MCF 10A (cell line): ENCODE measurements at regions of chr9 and their contacts with region 1.

Region 1: DNA sequence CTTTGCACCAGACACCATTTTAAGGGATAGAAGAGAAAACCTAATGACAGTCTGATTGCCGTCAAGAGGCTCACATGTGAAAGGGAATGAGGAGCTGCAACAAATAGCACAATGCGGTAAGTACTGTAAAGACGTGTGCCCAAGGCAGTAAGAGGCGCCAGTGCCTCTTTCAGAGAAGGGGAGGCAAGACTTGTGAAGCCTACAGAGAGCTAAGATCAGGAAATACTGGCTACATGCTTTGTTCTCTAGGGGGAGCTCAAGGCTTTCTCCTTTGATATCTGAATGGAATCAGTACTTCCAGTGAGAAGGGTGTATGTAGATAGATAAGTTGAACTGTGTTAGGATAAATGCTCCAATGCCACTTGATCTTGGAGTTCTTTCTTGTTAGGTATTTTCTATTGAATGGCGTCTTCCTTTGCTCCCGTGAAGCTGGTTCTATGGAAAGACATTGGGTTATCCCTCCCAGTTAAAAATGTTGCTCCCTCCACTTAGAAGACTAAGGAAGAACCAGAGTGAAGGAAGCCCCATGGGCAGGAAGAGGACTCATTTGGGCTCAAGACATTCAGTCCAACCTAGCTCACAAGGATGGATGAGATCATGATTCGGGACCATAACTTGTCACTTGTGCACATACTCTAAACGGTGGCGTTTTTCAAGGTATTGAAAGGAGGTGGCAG is 23.5 kb upstream of the ALDOB start:
- DNase-seq: peak; percentile 84
- H3K4me3 Mint-ChIP-seq: no peak overlapping the region
- H3K27ac Mint-ChIP-seq: no peak overlapping the region
- H3K4me1 Mint-ChIP-seq: peaks cover 6% of the 10 kb centered on the region
- H3K27me3 Mint-ChIP-seq: no peaks in the 10 kb centered on the region
- CTCF ChIP-seq: peak; percentile 71

Region 2: GRCh38 chr9:101443364-101443771 is 15.7 kb before region 1 on chr9:
- CTCF ChIA-PET with region 1: interaction called, 27 read pairs
- POLR2A ChIA-PET with region 1: interaction called, 3 read pairs
- intact Hi-C with region 1: no loop called
- DNase-seq: no peak
- H3K4me3 Mint-ChIP-seq: no peak overlapping the region
- H3K27ac Mint-ChIP-seq: no peak overlapping the region
- H3K4me1 Mint-ChIP-seq: peaks cover 9% of the 10 kb centered on the region
- H3K27me3 Mint-ChIP-seq: peaks cover 31% of the 10 kb centered on the region
- CTCF ChIP-seq: no peak

Region 3: DNA sequence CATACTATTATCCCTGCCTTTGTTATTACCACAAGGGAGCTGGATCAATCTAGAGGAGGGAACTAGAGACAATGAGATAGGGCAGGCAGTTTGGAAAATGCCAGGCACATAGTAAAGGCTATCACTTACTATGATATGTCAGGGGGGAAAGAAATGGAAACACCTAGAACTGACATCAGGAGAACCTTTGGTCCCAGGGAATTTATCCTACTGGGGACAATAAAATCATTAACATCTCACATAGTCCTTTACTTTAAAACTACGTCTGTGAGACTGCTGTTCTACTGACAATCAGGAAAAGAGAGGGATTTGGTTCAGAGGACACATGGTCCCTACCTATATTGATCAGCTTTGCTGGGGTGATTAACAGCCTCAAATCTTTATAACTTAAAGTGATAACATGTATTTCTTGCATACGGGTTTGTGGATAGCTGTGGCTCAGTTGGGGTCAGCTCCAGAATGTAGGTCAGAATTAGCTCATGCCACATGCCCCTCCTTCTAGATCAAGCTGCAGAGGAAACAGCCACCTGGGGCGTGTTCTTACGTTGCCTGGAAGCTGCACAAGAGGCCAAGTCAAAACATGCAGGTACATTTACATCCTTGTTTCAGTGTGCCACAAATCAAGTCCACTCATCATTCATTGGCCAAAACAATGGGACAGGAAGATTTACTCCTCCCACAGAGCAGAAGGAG is 20.4 kb after region 1 on chr9:
- CTCF ChIA-PET with region 1: interaction called, 173 read pairs
- POLR2A ChIA-PET with region 1: interaction called, 9 read pairs
- intact Hi-C with region 1: no loop called
- DNase-seq: peak; percentile 92
- H3K4me3 Mint-ChIP-seq: peak overlapping the region; percentile 44
- H3K27ac Mint-ChIP-seq: peak overlapping the region; percentile 60
- H3K4me1 Mint-ChIP-seq: peaks cover 68% of the 10 kb centered on the region
- H3K27me3 Mint-ChIP-seq: no peaks in the 10 kb centered on the region
- CTCF ChIP-seq: no peak

Region 4: DNA sequence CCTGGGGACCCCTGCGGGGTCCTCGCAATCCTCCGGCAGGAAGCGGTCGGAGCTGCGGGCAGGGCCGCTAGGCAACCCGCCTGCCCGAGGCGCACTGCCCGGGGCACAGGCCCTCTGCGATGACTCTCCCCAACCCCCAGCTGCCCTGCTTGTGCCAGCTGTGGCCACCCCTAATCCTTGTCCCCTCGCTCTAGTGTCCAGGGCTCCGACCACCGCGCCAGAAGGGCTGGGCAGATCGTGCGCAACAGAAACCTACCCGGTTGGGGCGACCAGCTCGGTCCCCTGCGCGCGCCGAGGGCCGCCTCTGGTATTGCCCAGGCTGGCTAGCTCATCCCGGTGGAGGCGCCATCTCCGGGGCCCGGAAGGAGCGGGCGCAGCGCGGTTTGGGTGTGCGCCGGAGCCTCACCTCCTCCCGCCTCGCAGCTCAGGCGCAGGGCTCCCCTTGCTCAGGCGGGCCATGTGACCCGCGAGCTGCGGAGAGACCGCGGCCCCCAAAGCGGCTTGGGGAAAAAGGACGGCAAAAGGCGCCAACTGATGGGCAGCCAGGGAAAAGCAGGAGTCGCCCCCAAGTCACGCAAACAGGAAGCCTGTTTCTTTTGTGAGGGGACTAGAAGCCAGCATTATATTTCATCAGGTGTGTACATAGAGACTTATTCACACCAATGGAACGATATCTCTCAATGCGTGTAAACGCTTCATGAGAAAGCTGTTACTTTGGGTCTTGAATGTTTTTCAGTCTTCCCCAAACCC is 27.8 kb after region 1 on chr9:
- CTCF ChIA-PET with region 1: interaction called, 173 read pairs
- POLR2A ChIA-PET with region 1: interaction called, 7 read pairs
- intact Hi-C with region 1: no loop called
- DNase-seq: peak; percentile 71
- H3K4me3 Mint-ChIP-seq: peak overlapping the region; percentile 82
- H3K27ac Mint-ChIP-seq: peak overlapping the region; percentile 92
- H3K4me1 Mint-ChIP-seq: peaks cover 25% of the 10 kb centered on the region
- H3K27me3 Mint-ChIP-seq: no peaks in the 10 kb centered on the region
- CTCF ChIP-seq: peak; percentile 4

Region 5: DNA sequence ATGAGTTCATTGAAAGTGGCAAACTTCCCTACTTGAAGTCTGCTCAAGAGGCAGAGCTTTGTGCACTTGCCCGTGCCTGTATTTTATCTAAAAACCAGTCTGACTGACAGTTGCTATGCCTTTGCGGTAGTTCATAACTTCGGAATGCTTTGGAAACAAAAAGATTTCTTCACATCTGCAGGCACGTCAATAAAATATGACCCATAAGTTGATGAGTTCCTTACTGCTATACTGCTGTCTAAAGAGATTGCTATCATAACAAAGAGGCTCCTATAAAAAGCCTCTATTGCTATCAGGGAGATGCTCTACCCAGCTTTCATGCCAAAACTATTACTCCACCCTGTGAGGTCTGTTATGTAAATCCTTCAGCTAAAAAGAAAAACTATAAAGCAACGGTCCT is 49.1 kb after region 1 on chr9:
- CTCF ChIA-PET with region 1: interaction called, 19 read pairs
- POLR2A ChIA-PET with region 1: interaction called, 4 read pairs
- intact Hi-C with region 1: no loop called
- DNase-seq: no peak
- H3K4me3 Mint-ChIP-seq: no peak overlapping the region
- H3K27ac Mint-ChIP-seq: no peak overlapping the region
- H3K4me1 Mint-ChIP-seq: no peaks in the 10 kb centered on the region
- H3K27me3 Mint-ChIP-seq: no peaks in the 10 kb centered on the region
- CTCF ChIP-seq: no peak

Region 6: DNA sequence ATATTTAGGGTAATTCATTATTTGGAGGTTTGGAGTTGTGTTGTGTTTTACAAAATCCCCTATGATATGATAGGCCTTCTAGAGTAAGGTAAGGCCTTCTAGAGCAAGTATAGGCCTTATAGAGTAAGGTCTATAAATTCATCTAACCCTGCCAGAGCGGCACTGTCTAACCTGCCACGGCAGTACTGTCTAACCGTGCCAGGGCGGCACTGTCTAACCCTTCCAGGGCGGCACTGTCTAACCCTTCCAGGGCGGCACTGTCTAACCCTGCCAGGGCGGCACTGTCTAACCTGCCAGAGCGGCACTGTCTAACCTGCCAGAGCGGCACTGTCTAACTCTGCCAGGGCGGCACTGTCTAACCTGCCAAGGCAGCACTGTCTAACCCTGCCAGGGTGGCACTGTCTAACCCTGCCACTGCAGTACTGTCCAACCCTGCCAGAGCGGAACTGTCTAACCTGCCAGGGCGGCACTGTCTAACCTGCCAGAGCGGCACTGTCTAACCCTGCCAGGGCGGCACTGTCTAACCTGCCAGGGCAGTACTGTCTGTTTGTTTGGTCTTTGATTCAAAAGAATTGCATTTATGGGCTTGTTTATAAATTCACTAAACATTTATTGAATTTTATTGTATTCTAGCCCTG is 84.1 kb after region 1 on chr9:
- CTCF ChIA-PET with region 1: interaction called, 751 read pairs
- POLR2A ChIA-PET with region 1: no interaction called
- intact Hi-C with region 1: no loop called
- DNase-seq: no peak
- H3K4me3 Mint-ChIP-seq: no peak overlapping the region
- H3K27ac Mint-ChIP-seq: no peak overlapping the region
- H3K4me1 Mint-ChIP-seq: peaks cover 5% of the 10 kb centered on the region
- H3K27me3 Mint-ChIP-seq: no peaks in the 10 kb centered on the region
- CTCF ChIP-seq: no peak

Region 7: DNA sequence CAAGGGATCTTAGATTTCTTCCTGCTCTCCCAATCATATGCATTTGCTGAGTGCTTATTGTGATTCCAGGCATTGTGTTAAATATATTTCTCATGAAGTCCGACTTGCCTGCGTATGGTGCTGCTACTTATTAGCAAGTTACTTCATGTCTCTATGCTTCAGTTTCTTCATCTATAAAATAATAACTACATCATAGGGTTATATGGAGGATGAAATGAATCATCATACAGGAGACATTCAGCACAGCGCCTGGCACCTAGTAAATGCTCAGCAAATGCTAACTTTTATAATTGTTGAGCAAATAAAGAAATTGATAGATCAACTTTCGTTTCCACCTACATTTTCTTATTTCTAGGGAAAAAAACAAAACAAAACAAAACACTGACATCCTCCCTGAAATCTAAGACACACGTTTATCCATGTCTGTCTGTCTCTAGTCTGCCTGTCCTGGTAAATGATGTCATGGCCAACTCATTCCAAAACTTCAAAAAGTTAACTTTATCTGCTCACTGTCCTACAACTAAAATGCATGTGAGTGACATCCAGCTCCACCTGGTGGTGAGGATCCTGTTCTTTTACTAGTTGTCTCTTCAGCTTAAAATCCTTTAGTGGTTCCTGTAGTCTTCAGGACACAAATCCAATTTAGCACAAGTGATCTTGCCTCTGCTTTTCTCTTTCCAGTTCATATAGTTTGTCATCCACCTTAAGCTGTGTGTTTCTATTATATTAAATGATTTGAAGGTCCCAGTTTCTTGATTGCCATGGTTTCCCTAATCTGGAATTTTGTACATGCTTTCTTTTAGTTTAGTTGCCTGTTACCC is 108.0 kb after region 1 on chr9:
- CTCF ChIA-PET with region 1: interaction called, 83 read pairs
- POLR2A ChIA-PET with region 1: no interaction called
- intact Hi-C with region 1: loop called (anchors 1 kb)
- DNase-seq: peak; percentile 45
- H3K4me3 Mint-ChIP-seq: no peak overlapping the region
- H3K27ac Mint-ChIP-seq: no peak overlapping the region
- H3K4me1 Mint-ChIP-seq: no peaks in the 10 kb centered on the region
- H3K27me3 Mint-ChIP-seq: no peaks in the 10 kb centered on the region
- CTCF ChIP-seq: no peak